Aorta (tissue), 5 donors: ENCODE measurements at regions of chr5 and their contacts with region 1.

Region 1: DNA sequence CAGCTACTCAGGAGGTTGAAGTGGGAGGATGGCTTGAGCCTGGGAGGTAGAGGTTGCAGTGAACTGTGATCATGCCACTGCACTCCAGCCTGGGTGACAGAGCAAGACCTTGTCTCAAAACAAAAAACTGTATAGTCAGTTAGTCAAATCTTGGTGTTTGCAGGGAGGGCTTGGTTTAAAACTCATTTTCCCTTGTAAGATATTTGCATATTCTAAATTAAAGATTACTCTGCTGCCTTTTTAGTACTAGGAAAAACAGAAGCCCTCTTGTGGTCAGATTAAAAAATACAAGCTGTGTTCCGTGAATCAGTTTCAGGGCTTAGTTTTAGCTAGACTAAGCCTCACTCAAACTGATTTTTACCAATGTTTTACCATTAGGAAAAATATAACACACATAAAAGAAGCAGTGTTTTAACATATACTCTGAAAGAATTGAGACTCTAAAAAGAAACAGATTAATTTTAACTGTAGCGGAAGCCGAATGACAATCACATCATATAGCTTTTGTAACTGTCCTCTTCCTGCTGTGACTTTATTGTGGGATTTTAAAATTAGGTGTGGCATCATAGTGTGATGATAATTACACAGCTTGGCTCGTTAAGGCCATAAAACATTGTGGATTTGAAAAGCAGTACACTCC is 84.9 kb upstream of the BASP1 start:
- DNase-seq: no peak
- ATAC-seq: no peak
- H3K4me3 ChIP-seq: no peak overlapping the region
- H3K27ac ChIP-seq: no peak overlapping the region
- H3K4me1 ChIP-seq: peaks cover 2 to 5% of the 10 kb centered on the region in 2 donors
- H3K27me3 ChIP-seq: no peaks in the 10 kb centered on the region

Region 2: DNA sequence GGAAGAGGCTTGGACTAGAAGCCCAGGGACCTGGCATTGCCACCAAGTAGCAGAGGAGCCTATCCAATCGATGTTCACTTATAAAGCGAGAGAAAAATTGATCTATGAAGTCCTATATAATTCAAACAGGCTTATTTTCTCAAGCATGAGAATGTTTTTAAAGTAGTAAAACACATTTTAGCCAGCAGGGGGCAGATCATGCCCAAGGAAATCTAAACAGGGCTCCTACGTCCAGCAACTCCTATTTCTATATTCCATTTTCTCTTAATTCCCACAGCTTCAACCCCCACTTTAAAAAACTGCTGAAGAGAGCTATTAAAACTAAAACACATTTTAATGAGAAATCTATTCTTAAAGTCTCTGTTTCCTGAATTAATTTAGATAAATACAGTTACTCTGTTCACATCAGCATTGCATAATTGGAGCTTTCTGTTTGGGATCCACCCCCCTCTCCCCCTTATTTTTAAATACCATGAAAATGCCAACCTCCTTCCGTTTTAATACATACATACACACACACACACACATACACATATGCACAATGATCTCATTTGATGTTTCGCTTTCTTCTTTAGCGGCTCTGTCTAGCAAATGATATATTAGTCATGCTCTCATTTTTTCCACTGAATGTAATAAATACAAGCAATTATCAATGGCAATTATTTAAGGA is 341.4 kb before region 1 on chr5:
- intact Hi-C with region 1: loop called (anchors 5 kb)
- DNase-seq: no peak
- ATAC-seq: peak; percentile 62
- H3K4me3 ChIP-seq: no peak overlapping the region
- H3K27ac ChIP-seq: no peak overlapping the region
- H3K4me1 ChIP-seq: no peaks in the 10 kb centered on the region
- H3K27me3 ChIP-seq: no peaks in the 10 kb centered on the region

Region 3: GRCh38 chr5:16995372-16995771 is 137.2 kb before region 1 on chr5:
- intact Hi-C with region 1: loop called (anchors 5 kb)
- DNase-seq: no peak
- ATAC-seq: no peak
- H3K4me3 ChIP-seq: no peak overlapping the region
- H3K27ac ChIP-seq: no peak overlapping the region
- H3K4me1 ChIP-seq: no peaks in the 10 kb centered on the region
- H3K27me3 ChIP-seq: no peaks in the 10 kb centered on the region

Region 4: GRCh38 chr5:17000291-17000939 is 132.1 kb before region 1 on chr5:
- intact Hi-C with region 1: loop called (anchors 5 kb)
- DNase-seq: no peak
- ATAC-seq: no peak
- H3K4me3 ChIP-seq: no peak overlapping the region
- H3K27ac ChIP-seq: no peak overlapping the region
- H3K4me1 ChIP-seq: peaks cover 0 to 3% of the 10 kb centered on the region in 2 donors
- H3K27me3 ChIP-seq: no peaks in the 10 kb centered on the region

Region 5: DNA sequence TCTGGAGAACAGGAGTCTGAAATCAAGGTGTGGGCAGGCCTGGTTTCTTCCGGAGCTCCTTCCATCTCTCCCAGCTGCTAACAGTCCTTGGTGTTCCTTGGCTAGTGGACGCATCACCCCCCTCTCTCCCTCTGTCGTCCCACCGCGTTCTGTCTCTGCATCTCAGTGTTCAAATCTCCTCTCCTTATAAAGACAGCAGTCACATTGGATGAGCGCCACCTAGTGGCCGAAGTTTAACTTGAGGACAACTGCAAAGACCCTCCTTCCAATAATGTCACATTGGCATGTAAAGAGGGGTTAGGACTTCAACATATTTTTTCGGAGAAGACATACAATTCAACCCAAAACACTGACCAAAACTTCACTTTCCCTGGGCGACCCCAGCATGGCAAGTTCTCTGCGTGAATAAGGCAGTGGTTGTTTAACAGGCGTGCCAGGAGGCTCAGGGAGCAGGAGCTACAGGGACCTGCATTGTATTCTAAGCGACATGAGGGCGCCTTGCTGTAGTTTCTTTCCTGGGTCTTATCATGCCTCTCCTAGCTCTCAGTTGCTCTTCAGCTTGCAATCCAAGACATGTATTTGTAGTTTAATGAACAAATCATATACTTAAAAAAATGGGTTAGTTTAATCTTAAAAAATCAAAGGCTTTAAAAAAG is 56.9 kb after region 1 on chr5:
- intact Hi-C with region 1: loop called (anchors 5 kb)
- DNase-seq: peak; percentile 80 to 90
- ATAC-seq: peak; percentile 69
- H3K4me3 ChIP-seq: no peak overlapping the region
- H3K27ac ChIP-seq: no peak overlapping the region
- H3K4me1 ChIP-seq: no peaks in the 10 kb centered on the region
- H3K27me3 ChIP-seq: no peaks in the 10 kb centered on the region